ENCODE measurements at regions of chr11 and their contacts with region 1.

Region 1: GRCh38 chr11:19076744-19077589 is 16.4 kb upstream of the MRGPRX2 start:
- DNase-seq: no peak
- H3K4me3 ChIP-seq: no peak overlapping the region
- H3K27me3 ChIP-seq: no peaks in the 10 kb centered on the region
- CTCF ChIP-seq: peak; percentile 99

Region 2: DNA sequence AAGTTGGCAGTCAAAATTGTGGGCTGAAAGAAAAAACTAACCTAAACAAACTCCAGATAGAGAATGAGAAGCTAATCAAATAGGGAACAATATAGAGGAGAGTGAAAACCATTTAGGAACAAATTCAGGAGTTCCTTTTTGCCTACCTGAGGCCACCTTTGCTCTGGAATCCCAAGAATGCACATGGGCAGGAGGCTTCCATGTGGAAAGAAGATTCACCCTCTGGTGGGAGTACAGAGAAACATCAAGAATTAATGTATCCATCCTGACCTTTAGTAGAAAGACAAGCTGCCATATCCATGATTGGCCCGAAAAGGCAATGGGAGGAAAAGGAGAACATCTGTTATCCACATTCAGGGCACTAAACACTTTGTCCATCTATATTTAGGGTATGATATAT is 102.8 kb before region 1 on chr11:
- CTCF ChIA-PET with region 1: no interaction called
- POLR2A ChIA-PET with region 1: no interaction called
- DNase-seq: no peak
- H3K4me3 ChIP-seq: no peak overlapping the region
- H3K27me3 ChIP-seq: no peaks in the 10 kb centered on the region
- CTCF ChIP-seq: no peak

Region 3: DNA sequence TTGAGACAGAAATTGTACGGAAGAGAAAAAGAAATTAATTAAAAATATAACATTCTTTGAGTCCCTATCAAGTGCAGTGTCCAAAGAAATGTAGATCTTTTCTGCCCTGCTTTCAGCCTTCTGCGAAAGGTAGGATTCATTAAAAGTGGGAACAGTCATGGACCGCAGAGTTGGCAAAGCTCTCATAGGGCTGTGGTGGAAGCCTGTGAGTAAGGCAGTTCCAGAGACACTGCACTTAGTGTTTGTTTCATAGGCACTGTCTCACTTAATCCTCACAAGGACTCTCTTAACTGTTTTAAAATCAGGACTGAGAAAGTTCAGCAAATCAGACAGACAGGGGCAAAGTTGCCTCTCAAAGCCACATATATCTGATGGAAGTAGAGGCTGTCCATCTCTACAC is 22.0 kb before region 1 on chr11:
- CTCF ChIA-PET with region 1: interaction called, 11 read pairs
- POLR2A ChIA-PET with region 1: no interaction called
- DNase-seq: no peak
- H3K4me3 ChIP-seq: no peak overlapping the region
- H3K27me3 ChIP-seq: peaks cover 3% of the 10 kb centered on the region
- CTCF ChIP-seq: no peak

Region 4: GRCh38 chr11:19060629-19061028 is 16.3 kb before region 1 on chr11 and contains the start of gene MRGPRX2:
- CTCF ChIA-PET with region 1: interaction called, 11 read pairs
- POLR2A ChIA-PET with region 1: no interaction called
- DNase-seq: no peak
- H3K4me3 ChIP-seq: no peak within 1 kb of the TSS
- H3K27me3 ChIP-seq: peaks cover 5% of the 10 kb centered on the region
- CTCF ChIP-seq: no peak
- polyA plus RNA-seq, gene MRGPRX2: not detected in 2 replicates

Region 5: GRCh38 chr11:19110280-19110679 is 33.3 kb after region 1 on chr11:
- CTCF ChIA-PET with region 1: interaction called, 11 read pairs
- POLR2A ChIA-PET with region 1: no interaction called
- DNase-seq: no peak
- H3K4me3 ChIP-seq: no peak overlapping the region
- H3K27me3 ChIP-seq: peaks cover 9% of the 10 kb centered on the region
- CTCF ChIP-seq: no peak

Region 6: GRCh38 chr11:19121646-19122045 is 44.7 kb after region 1 on chr11:
- CTCF ChIA-PET with region 1: interaction called, 10 read pairs
- POLR2A ChIA-PET with region 1: no interaction called
- DNase-seq: no peak
- H3K4me3 ChIP-seq: no peak overlapping the region
- H3K27me3 ChIP-seq: no peaks in the 10 kb centered on the region
- CTCF ChIP-seq: no peak

Measured in BJ (cell line).